Ascending aorta (tissue), 2 donors: ENCODE measurements at regions of chr4 and their contacts with region 1.

Region 1: GRCh38 chr4:37802068-37802666 is 24.3 kb upstream of the PGM2 start:
- DNase-seq: no peak
- H3K4me3 ChIP-seq: no peak overlapping the region
- H3K27ac ChIP-seq: no peak overlapping the region
- H3K4me1 ChIP-seq: no peaks in the 10 kb centered on the region
- H3K27me3 ChIP-seq: no peaks in the 10 kb centered on the region
- CTCF ChIP-seq: peak; percentile 23 to 70 (median 45)

Region 2: DNA sequence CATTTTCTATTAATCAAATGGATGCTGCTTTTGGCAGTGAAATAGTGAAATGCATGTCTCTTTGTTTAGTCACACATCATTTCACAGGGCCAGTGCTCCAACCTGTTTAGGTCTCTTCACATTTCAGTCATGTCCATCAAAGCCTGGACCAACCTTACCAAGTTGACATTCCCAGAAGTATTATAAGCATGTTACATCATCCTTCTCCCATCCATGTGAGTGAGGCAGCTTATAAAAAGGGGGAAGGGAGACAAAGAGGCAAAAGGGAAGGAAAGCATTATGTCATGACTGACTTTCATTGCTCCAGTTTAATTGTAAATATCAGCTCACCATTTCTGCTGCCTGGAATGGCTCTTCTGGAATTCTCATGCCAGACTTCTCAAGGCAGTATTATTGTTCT is 463.2 kb before region 1 on chr4:
- intact Hi-C with region 1: no loop called
- DNase-seq: no peak
- H3K4me3 ChIP-seq: no peak overlapping the region
- H3K27ac ChIP-seq: no peak overlapping the region
- H3K4me1 ChIP-seq: no peaks in the 10 kb centered on the region
- H3K27me3 ChIP-seq: no peaks in the 10 kb centered on the region
- CTCF ChIP-seq: no peak

Region 3: DNA sequence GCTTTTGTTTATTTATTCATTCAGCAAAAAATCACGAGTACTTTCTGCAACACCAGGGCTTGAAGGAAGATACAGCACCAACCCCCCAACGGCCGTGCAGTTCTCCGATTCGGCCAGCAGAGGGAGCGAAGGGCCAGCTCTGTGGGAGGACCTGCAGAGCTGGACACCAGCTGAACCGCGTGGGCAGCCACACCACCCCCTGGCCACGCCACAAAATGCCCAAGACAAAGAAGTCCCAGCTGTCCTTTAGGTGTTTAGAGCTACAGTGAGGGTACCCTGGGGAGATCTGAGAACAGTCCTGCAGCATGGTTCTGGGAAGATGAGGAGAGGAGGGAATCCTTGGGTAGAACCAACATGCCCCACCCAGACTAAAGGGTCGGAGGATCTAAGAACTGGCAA is 199.1 kb before region 1 on chr4:
- intact Hi-C with region 1: loop called (anchors 2 kb)
- DNase-seq: peak; percentile 34 to 87
- H3K4me3 ChIP-seq: no peak overlapping the region
- H3K27ac ChIP-seq: no peak overlapping the region
- H3K4me1 ChIP-seq: no peaks in the 10 kb centered on the region
- H3K27me3 ChIP-seq: no peaks in the 10 kb centered on the region
- CTCF ChIP-seq: peak; percentile 91 to 99 (median 96)

Region 4: GRCh38 chr4:37922328-37922727 is 120.2 kb after region 1 on chr4:
- intact Hi-C with region 1: no loop called
- DNase-seq: no peak
- H3K4me3 ChIP-seq: no peak overlapping the region
- H3K27ac ChIP-seq: no peak overlapping the region
- H3K4me1 ChIP-seq: no peaks in the 10 kb centered on the region
- H3K27me3 ChIP-seq: no peaks in the 10 kb centered on the region
- CTCF ChIP-seq: no peak